SK-N-SH (cell line): ENCODE measurements at regions of chr4 and their contacts with region 1.

Region 1: DNA sequence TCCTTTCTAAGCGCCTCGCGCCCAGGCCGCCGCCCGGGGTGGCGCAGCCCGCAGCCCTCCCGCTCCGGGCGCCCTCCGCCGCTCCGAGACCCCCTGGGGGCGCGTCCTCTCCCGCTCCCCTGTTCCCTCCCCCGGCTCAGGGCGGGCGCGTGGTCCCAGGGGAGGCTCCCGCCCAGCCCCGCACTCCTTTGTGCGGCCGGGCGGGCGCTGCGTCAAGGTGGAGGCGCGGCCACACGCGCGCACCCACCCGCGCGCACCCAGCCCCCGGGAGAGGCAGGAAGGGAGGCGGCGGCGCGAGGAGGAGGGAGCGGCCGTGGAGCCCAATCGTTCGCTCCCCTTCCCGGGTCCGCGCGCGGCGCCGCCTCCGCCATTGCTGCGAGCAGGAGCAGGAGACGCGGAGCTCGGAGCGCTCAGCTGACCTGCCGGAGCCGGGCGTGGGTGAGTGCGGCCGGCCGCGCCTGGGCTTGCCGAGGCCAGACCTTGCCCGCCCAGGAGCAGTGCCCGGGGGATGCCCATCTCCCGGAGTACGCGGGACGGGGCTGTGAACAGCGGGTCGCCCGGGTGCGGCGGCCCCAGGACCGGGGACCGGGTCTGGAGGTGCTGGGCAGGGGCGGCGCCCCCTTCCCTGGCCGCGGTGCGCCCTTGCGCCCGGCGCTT is at the start of gene NSG1:
- DNase-seq: no peak
- H3K4me3 ChIP-seq: peak within 1 kb of the TSS; percentile 56 to 70
- H3K27ac ChIP-seq: 0 out of 4 replicates have a peak within 1 kb of the TSS, but pooled peaks of 1 of the 2 experiments have one; percentile 28
- H3K4me1 ChIP-seq: peaks cover 0 to 11% of the 10 kb centered on the region in 2 experiments; a peak in 1 of 4 replicates
- H3K27me3 ChIP-seq: peaks cover 11% of the 10 kb centered on the region
- CTCF ChIP-seq: no peak
- EP300 ChIP-seq: no peak
- RAD21 ChIP-seq: no peak
- polyA plus RNA-seq, gene NSG1: 10.4 and 11.4 TPM in 2 replicates

Region 2: GRCh38 chr4:3688018-3688998 is 698.6 kb before region 1 on chr4:
- CTCF ChIA-PET with region 1: no interaction called
- POLR2A ChIA-PET with region 1: no interaction called
- DNase-seq: no peak
- H3K4me3 ChIP-seq: no peak overlapping the region
- H3K27ac ChIP-seq: no peak overlapping the region
- H3K4me1 ChIP-seq: peaks cover 0 to 2% of the 10 kb centered on the region in 2 experiments; a peak in 1 of 4 replicates
- H3K27me3 ChIP-seq: no peaks in the 10 kb centered on the region
- CTCF ChIP-seq: no peak
- EP300 ChIP-seq: no peak
- RAD21 ChIP-seq: no peak

Region 3: GRCh38 chr4:4260253-4260652 is 126.6 kb before region 1 on chr4:
- CTCF ChIA-PET with region 1: no interaction called
- POLR2A ChIA-PET with region 1: no interaction called
- DNase-seq: peak; percentile 59
- H3K4me3 ChIP-seq: no peak overlapping the region
- H3K27ac ChIP-seq: no peak overlapping the region
- H3K4me1 ChIP-seq: no peaks in the 10 kb centered on the region
- H3K27me3 ChIP-seq: no peaks in the 10 kb centered on the region
- CTCF ChIP-seq: peak; percentile 63
- EP300 ChIP-seq: no peak
- RAD21 ChIP-seq: peak; percentile 59

Region 4: GRCh38 chr4:4406455-4407298 is 19.8 kb after region 1 on chr4:
- CTCF ChIA-PET with region 1: interaction called, 10 read pairs
- POLR2A ChIA-PET with region 1: interaction called, 8 read pairs
- DNase-seq: peak; percentile 90
- H3K4me3 ChIP-seq: no peak overlapping the region
- H3K27ac ChIP-seq: peak overlapping the region in 1 of 2 experiments; percentile 94; a peak in 2 of 4 replicates
- H3K4me1 ChIP-seq: peaks cover 0 to 30% of the 10 kb centered on the region in 2 experiments; a peak in 2 of 4 replicates
- H3K27me3 ChIP-seq: no peaks in the 10 kb centered on the region
- CTCF ChIP-seq: no peak
- EP300 ChIP-seq: peak in 1 of 2 experiments; percentile 50; a peak in 2 of 4 replicates
- RAD21 ChIP-seq: no peak; the same call in 1 of the 2 replicates

Region 5: GRCh38 chr4:4418676-4419390 is 32.0 kb after region 1 on chr4:
- CTCF ChIA-PET with region 1: interaction called, 13 read pairs
- POLR2A ChIA-PET with region 1: no interaction called
- DNase-seq: no peak
- H3K4me3 ChIP-seq: no peak overlapping the region
- H3K27ac ChIP-seq: no peak overlapping the region
- H3K4me1 ChIP-seq: no peaks in the 10 kb centered on the region; a peak in 1 of 4 replicates
- H3K27me3 ChIP-seq: no peaks in the 10 kb centered on the region
- CTCF ChIP-seq: no peak
- EP300 ChIP-seq: no peak
- RAD21 ChIP-seq: no peak

Region 6: GRCh38 chr4:4430492-4431197 is 43.8 kb after region 1 on chr4:
- CTCF ChIA-PET with region 1: interaction called, 23 read pairs
- POLR2A ChIA-PET with region 1: interaction called, 3 read pairs
- DNase-seq: peak; percentile 77
- H3K4me3 ChIP-seq: peak overlapping the region in 1 of 2 experiments; percentile 35; a peak in 1 of 4 replicates
- H3K27ac ChIP-seq: no peak overlapping the region
- H3K4me1 ChIP-seq: peaks cover 0 to 3% of the 10 kb centered on the region in 2 experiments; a peak in 1 of 4 replicates
- H3K27me3 ChIP-seq: no peaks in the 10 kb centered on the region
- CTCF ChIP-seq: peak; percentile 79
- EP300 ChIP-seq: no peak
- RAD21 ChIP-seq: peak; percentile 69